ENCODE measurements at regions of chr6 and their contacts with region 1.

Region 1: DNA sequence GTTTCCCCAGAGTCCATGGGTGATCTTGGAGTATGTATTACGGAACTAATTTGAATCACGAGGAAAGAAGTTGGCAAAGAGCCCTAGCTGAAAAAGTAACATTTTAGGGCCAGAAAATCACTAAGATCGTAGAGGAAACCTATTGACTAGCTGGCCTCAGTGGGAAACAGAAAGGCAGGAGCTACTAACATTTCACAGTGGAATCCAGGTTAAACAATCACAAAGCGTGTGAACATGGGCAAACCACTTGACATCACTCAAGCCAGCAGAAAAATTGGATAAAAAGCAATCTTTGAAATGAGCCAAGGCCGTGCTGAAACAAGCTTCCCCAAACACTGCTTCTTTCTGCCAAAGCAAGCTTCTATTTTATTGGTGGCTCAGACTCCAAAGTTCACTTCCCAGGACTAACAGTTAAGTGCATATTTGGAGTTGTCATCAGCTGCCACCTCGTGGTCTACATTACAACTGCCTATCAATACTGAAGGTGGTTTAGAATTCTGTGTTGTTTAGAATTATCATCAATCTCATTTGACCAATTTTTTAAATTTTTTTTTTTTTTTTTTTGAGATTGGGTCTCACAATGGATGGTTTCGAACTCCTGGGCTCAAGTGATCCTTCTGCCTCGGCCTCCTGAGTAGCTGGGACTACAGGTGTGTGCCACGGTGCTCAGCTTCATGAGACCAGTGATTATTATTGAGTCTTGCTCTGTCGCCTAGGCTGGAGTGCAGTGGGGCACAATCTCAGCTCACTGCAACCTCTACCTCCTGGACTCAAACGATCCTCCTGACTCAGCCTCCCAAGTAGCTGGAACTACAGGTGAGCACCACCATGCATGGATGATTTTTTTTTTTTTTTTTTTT is 10.6 kb downstream of the RPS10 start:
- DNase-seq: peak; percentile 99
- ATAC-seq: peak; percentile 87
- H3K4me3 ChIP-seq: peak overlapping the region in 2 of 3 experiments; percentile 12 to 42; a peak in 3 of 6 replicates
- H3K27ac ChIP-seq: peak overlapping the region; percentile 82
- H3K4me1 ChIP-seq: peaks cover 49% of the 10 kb centered on the region
- H3K27me3 ChIP-seq: no peaks in the 10 kb centered on the region
- CTCF ChIP-seq: peak; percentile 89
- EP300 ChIP-seq: peak in 1 of 2 experiments; percentile 46; a peak in 2 of 4 replicates
- POLR2A ChIP-seq: peak in 1 of 2 experiments; percentile 35; a peak in 1 of 4 replicates
- RAD21 ChIP-seq: peak; percentile 92

Region 2: GRCh38 chr6:34161857-34162515 is 253.2 kb before region 1 on chr6:
- CTCF ChIA-PET with region 1: interaction called, 15 read pairs
- POLR2A ChIA-PET with region 1: interaction called, 5 read pairs
- in situ Hi-C with region 1: no loop called
- intact Hi-C with region 1: loop called (anchors 10 kb)
- DNase-seq: no peak
- ATAC-seq: no peak
- H3K4me3 ChIP-seq: no peak overlapping the region
- H3K27ac ChIP-seq: no peak overlapping the region
- H3K4me1 ChIP-seq: peaks cover 8% of the 10 kb centered on the region; the same call in 1 of the 2 replicates
- H3K27me3 ChIP-seq: peaks cover 0 to 17% of the 10 kb centered on the region in 2 experiments; a peak in 3 of 5 replicates
- CTCF ChIP-seq: no peak
- EP300 ChIP-seq: no peak
- POLR2A ChIP-seq: no peak
- RAD21 ChIP-seq: no peak

Region 3: DNA sequence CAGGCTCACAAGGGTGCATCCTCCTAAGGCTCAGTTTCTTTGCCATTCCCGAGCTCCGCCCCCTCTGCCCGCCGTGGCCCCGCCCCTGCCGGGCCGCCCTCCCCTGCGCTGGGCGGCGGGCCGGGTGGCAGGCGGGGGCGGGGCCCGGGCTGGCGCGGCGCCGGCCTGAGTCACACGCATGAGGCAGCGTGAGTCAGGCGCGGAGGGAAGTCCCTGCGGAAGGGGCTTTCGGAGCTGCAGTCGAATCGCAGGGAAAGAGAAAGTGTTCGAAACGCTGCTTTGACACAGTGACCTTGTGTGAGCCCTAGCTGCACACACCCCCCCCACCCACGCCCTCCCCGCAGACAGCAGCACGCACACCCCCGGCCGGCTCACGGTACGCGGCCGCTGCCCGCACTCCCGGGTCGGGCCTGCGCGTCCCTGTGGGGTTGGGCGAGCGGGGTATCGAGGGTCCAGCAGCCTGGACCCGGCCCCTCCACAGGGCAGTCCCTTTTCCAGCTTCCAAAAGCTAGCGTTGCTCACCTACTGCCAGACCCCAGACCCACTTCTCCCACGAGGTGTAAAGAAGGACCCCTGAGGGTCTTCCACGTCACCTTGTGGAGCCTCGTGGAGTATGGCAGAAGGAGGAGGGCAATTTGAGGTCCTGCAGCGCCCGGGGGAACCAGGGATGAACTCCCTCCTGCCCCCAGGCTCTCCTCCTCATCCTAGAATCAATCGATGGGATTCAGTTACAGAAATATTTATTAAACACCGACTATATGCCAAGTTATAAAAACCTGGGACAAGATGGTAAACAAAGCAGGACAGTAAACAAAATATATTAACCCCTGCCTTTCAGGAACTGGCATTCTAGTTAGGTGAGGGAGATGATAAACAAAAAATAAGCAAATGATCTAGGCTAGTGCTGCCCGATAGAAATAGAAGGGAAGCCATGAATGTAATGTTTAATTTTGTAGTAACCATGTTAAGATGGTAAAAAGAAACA is 191.0 kb before region 1 on chr6:
- CTCF ChIA-PET with region 1: no interaction called
- POLR2A ChIA-PET with region 1: interaction called, 13 read pairs
- in situ Hi-C with region 1: no loop called
- intact Hi-C with region 1: no loop called
- DNase-seq: peak; percentile 81
- ATAC-seq: peak; percentile 91
- H3K4me3 ChIP-seq: peak overlapping the region; percentile 60 to 76 (median 72)
- H3K27ac ChIP-seq: peak overlapping the region; percentile 38
- H3K4me1 ChIP-seq: peaks cover 38% of the 10 kb centered on the region
- H3K27me3 ChIP-seq: peaks cover 3 to 25% of the 10 kb centered on the region in 2 experiments; a peak in 2 of 5 replicates
- CTCF ChIP-seq: no peak
- EP300 ChIP-seq: peak in 1 of 2 experiments; percentile 24; a peak in 1 of 4 replicates
- POLR2A ChIP-seq: peak; percentile 88 to 93
- RAD21 ChIP-seq: peak; percentile 9; the same call in 1 of the 2 replicates

Region 4: DNA sequence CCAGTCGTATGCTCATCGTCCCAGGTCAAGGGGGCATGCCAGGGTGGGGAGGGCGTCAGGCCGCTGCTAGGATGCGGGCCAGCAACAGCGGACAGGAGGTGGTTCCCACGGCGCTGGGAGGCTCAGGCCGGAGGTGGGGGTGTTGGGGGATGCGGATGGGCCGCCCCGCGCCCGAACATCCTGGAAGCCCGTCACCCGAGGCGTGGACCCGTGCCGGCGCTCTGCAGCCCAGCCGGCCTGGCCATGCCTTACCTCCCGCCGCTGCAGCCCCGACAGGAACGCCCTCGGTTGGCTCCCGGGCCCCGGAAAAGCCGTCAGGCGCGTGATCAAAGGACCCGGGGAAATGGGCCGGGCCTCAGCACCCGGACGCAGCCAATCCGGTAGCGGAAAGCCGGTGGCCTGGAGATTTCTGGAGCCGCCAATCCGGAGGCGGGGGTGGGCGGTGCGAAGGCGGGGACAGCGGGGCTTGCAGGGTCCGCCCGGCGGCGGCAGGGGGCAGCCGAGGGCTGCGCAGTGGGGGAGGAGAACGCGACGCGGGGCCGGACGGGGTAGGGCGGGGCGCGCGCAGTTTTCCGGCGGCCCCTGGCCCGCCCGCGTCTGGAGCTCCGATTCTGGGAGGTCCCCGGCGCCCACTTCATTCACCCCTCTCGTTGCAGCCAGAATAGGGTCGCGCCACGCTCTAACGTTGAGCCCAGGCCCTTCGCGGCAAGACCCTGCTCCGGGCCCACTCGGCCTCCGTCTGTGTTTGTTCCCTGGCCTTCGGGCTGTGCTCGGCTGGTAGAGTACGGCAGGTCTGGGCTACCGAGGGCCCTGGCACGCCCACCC is 166.3 kb before region 1 on chr6 and contains the start of gene SMIM29:
- CTCF ChIA-PET with region 1: interaction called, 27 read pairs
- POLR2A ChIA-PET with region 1: interaction called, 100 read pairs
- in situ Hi-C with region 1: loop called (anchors 5 kb)
- intact Hi-C with region 1: loop called (anchors 1 kb)
- DNase-seq: peak; percentile 94
- ATAC-seq: peak; percentile 87
- H3K4me3 ChIP-seq: peak within 1 kb of the TSS; percentile 82 to 99 (median 98)
- H3K27ac ChIP-seq: peak within 1 kb of the TSS; percentile 60
- H3K4me1 ChIP-seq: peaks cover 39% of the 10 kb centered on the region
- H3K27me3 ChIP-seq: no peaks in the 10 kb centered on the region
- CTCF ChIP-seq: peak; percentile 92
- EP300 ChIP-seq: peak; percentile 11 to 50; a peak in 2 of 4 replicates
- POLR2A ChIP-seq: peak; percentile 46 to 77; a peak in 3 of 4 replicates
- RAD21 ChIP-seq: peak; percentile 98
- total RNA-seq, gene SMIM29: 11.2 and 15.3 TPM in 2 replicates

Region 5: DNA sequence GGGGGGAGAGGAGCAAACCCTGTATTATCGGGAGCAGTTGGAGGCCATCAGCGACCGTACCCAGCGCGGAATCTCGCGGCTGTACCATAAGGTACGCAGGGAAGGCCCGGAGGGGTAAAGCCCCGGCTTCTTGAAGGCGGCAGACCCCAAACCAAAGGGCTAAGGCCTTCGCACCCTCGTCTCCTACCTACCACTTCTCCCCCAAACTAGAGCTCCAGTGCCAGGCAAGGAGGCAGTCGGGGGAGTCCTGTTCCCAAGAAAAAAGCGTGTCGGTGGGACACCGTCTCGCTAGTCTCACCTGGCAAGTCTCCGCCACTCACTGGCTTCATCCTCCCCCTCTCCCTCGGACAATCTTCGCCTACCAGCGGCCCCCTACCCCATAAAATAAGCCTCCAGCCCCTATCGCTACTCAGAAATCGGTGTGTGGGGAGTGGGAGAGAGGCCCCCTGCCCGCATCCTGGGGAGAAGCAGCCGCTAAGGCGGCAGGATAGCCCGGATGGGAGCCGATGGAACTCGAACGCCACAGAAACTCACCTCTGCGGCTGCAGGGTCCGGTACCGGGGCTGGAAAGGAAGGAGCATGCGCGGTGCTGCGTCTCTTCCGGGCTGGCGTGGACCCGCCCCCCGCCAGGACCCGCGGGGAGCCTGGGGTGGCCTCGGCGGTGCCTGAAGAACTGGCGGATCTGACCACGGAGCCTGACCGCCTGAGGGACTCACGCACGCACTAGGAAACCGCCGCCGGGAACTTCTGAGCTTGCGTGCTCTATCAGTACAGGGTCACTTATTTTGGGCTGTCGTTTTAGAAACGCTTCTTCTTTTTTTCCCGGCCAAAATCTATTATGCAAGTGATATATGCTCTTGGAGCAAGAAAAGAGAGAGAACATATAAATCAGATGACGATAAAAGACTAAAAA is 10.5 kb after region 1 on chr6 and contains the start of gene RPS10:
- CTCF ChIA-PET with region 1: no interaction called
- POLR2A ChIA-PET with region 1: interaction called, 71 read pairs
- in situ Hi-C with region 1: no loop called
- intact Hi-C with region 1: no loop called
- DNase-seq: peak; percentile 90
- ATAC-seq: peak; percentile 93
- H3K4me3 ChIP-seq: peak within 1 kb of the TSS; percentile 74 to 98 (median 89)
- H3K27ac ChIP-seq: peak within 1 kb of the TSS; percentile 73
- H3K4me1 ChIP-seq: peaks cover 58% of the 10 kb centered on the region
- H3K27me3 ChIP-seq: peaks cover 0 to 2% of the 10 kb centered on the region in 2 experiments; a peak in 1 of 5 replicates
- CTCF ChIP-seq: peak; percentile 52
- EP300 ChIP-seq: 0 out of 4 replicates have a peak, but pooled peaks of 1 of the 2 experiments have one; percentile 38
- POLR2A ChIP-seq: peak; percentile 97 to 98
- RAD21 ChIP-seq: peak; percentile 56
- total RNA-seq, gene RPS10: 2,909 and 3,503 TPM in 2 replicates